Activated CD4-positive, alpha-beta T cell treated with anti-CD3 and anti-CD28 coated beads for 36 hours (primary cell): ENCODE measurements at regions of chr9 and their contacts with region 1.

Region 1: GRCh38 chr9:136790927-136791641 is at the start of gene TMEM141:
- DNase-seq: peak; percentile 100
- ATAC-seq: peak; percentile 93
- H3K4me3 Mint-ChIP-seq: peak within 1 kb of the TSS; percentile 80
- H3K27ac Mint-ChIP-seq: peak within 1 kb of the TSS; percentile 84
- H3K4me1 Mint-ChIP-seq: peaks cover 20% of the 10 kb centered on the region
- H3K27me3 Mint-ChIP-seq: no peaks in the 10 kb centered on the region
- total RNA-seq, gene TMEM141: 30.9 to 47.1 TPM

Region 2: GRCh38 chr9:136437472-136438288 is 353.4 kb before region 1 on chr9:
- CTCF ChIA-PET with region 1: no interaction called
- POLR2A ChIA-PET with region 1: no interaction called
- intact Hi-C with region 1: no loop called
- DNase-seq: no peak
- ATAC-seq: no peak
- H3K4me3 Mint-ChIP-seq: peak overlapping the region; percentile 80
- H3K27ac Mint-ChIP-seq: peak overlapping the region; percentile 70
- H3K4me1 Mint-ChIP-seq: peaks cover 21% of the 10 kb centered on the region
- H3K27me3 Mint-ChIP-seq: no peaks in the 10 kb centered on the region

Region 3: DNA sequence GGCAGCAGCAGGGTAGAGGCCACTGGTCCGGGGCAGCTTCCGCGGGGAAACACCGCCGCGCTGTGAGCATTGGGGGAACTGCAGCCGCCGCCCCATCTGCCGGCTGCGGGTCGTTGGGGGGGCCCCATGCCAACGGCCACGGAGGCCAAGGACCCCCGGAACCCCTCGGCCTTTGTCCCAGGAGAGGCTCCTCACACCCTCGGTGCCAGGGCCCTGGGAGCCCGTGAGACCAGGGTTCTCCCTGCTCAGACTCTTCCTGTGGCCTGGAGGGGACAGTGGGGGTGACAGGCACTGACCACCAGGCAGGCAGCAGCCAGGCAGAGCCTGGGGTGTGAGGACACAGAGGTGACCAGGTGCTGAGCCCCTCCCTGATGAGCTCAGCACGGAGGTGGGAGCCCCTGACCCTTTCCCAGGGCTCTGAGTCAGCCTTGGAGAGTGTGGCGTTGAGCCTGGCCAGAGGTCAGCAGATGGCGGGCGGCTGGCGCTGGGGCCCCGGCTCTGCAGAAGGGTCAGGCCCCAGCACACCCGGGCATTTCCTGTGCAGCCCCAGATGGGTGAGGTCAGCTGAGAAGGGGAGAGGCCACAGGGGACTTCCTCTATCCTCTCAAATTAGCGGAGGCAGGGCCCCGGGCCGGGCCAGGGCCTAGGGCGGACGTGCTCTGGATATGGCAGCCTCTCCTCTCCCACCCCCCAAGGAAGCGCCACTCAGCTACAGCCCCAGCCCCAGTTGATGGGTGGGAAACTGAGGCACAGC is 146.3 kb before region 1 on chr9:
- CTCF ChIA-PET with region 1: no interaction called
- POLR2A ChIA-PET with region 1: no interaction called
- intact Hi-C with region 1: no loop called
- DNase-seq: peak; percentile 87
- ATAC-seq: peak; percentile 98
- H3K4me3 Mint-ChIP-seq: no peak overlapping the region
- H3K27ac Mint-ChIP-seq: no peak overlapping the region
- H3K4me1 Mint-ChIP-seq: no peaks in the 10 kb centered on the region
- H3K27me3 Mint-ChIP-seq: peaks cover 20% of the 10 kb centered on the region

Region 4: DNA sequence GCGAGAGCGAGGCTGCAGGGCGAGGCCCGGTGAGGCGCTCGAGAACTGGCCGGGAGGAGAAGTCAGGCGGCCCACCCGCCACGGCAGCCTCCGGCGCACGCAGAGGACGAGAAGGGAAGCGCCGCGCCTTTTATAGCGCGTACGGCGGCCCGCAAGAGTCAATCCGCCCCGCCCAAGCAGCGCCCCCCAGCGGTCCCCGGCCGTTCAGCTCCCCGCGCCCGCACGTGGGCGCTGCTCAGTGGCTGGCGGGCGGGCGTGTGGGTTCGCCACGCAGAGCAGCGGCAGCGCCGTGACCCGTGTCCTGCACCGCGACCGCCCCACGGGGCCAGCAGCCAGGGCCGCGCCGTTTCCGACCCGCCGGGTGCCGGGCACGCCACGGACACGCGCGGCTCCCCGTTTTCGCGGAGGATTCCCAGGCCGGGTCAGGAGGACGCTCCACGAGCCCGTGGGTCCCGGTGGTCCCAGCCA is 63.0 kb before region 1 on chr9:
- CTCF ChIA-PET with region 1: interaction called, 7 read pairs
- POLR2A ChIA-PET with region 1: no interaction called
- intact Hi-C with region 1: loop called in 1 of 2 experiments (anchors 2 kb)
- DNase-seq: peak; percentile 95
- ATAC-seq: peak; percentile 72
- H3K4me3 Mint-ChIP-seq: peak overlapping the region; percentile 100
- H3K27ac Mint-ChIP-seq: no peak overlapping the region
- H3K4me1 Mint-ChIP-seq: peaks cover 39% of the 10 kb centered on the region
- H3K27me3 Mint-ChIP-seq: no peaks in the 10 kb centered on the region

Region 5: DNA sequence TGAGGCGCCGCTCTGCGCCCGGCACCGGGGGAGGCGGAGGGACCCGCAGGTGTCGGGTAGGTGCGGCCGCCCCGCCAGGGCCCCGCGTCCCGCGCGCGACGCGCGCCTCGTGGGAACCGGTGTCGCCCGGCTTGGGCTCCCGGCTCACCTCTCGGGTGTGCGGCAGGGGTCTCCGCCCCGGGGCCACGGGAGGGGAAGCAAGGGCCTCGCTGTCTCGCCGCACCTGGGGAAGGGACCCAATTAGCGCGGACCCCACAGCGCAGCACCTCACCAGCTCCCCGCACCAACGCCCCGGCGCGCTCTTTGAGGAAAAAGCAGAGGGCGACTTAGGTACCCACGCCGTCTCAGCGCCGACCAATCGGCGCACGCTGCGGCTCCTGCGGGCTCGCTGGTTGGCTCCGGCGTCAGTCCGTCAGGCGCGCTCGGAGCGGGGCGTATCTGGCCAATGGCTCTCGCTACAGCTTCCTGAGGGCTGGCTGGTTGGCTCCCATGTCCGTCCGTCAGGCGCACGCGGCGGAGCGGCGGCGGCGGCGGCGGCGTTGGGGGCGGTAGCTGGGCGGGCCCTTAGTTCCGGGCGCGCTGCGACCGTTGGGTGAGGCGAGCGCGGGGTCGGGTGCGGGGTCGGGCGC is 95.0 kb after region 1 on chr9 and contains the start of gene TRAF2:
- CTCF ChIA-PET with region 1: no interaction called
- POLR2A ChIA-PET with region 1: no interaction called
- intact Hi-C with region 1: loop called (anchors 1 to 5 kb)
- DNase-seq: peak; percentile 98
- ATAC-seq: peak; percentile 89
- H3K4me3 Mint-ChIP-seq: peak within 1 kb of the TSS; percentile 85
- H3K27ac Mint-ChIP-seq: peak within 1 kb of the TSS; percentile 95
- H3K4me1 Mint-ChIP-seq: peaks cover 51% of the 10 kb centered on the region
- H3K27me3 Mint-ChIP-seq: no peaks in the 10 kb centered on the region
- total RNA-seq, gene TRAF2: 37.4 to 46.2 TPM

Region 6: DNA sequence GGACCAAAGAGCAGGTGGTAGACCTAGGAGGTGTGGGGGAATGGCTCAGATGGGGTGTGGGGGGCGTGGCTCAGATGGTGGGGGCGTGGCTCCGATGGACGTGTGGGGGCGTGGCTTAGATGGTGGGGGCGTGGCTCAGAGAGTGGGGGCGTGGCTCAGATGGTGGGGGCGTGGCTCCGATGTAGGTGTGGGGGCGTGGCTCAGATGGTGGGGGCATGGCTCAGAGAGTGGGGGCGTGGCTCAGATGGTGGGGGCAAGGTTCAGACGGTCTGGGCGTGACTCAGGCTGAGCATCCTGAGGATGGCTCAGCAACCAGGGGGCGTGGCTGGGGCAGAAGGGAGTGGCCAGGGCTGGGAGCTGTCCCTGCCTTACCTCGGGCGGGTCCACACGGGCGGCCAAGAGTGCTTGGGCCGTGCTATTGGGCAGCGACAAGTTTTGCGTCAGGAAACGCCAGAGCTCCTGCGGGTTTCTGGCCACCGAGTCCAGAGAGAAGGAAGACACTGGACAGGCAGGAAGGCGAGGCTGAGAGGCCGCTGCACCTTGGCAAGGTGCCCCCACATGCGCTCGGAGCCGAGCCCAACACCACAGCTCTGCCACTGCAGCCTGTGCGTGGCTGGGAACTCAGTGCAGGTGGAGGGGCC is 231.0 kb after region 1 on chr9:
- CTCF ChIA-PET with region 1: interaction called, 4 read pairs
- POLR2A ChIA-PET with region 1: no interaction called
- intact Hi-C with region 1: loop called (anchors 1 to 5 kb)
- DNase-seq: peak; percentile 93
- ATAC-seq: peak; percentile 97
- H3K4me3 Mint-ChIP-seq: no peak overlapping the region
- H3K27ac Mint-ChIP-seq: no peak overlapping the region
- H3K4me1 Mint-ChIP-seq: peaks cover 3% of the 10 kb centered on the region
- H3K27me3 Mint-ChIP-seq: no peaks in the 10 kb centered on the region

Region 7: DNA sequence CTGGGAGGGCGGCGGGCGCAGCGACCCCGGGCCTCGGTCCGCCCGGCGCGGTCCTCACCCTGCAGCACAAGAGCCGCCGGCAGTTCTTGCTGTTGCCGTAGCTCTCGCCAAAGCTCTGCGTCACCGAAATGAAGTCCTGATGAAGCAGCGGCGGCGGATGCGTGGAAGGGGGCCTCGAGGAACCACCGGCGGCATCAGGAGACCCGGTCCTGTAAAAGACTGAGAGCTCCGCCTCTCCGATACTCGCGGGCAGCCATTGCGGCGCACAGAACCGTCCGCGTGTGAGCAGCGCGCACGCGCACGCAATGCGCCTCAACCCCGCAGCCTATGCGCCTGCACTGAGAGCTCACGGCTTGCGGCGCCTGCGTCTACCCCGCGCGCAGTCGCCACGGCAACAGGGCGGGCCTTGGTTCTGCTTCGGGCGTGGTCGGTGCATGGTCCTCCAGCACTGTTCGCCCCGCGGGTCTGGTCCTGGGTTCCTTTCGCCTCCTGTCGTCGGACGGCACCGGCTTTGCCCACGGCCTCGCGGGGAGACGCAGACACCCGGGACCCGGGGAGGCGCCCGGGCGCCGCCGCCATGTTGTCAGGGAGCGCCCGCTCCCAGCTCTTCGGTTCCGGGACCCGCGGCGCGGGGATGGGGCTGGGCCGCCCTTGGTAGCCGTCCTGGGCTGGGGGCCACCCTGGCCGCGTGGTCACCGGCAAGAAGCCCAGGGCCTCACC is 338.5 kb after region 1 on chr9:
- CTCF ChIA-PET with region 1: no interaction called
- POLR2A ChIA-PET with region 1: no interaction called
- intact Hi-C with region 1: loop called in 1 of 2 experiments (anchors 1 kb)
- DNase-seq: peak; percentile 95
- ATAC-seq: peak; percentile 96
- H3K4me3 Mint-ChIP-seq: peak overlapping the region; percentile 89
- H3K27ac Mint-ChIP-seq: peak overlapping the region; percentile 70
- H3K4me1 Mint-ChIP-seq: peaks cover 21% of the 10 kb centered on the region
- H3K27me3 Mint-ChIP-seq: peaks cover 5% of the 10 kb centered on the region

Region 8: GRCh38 chr9:137254624-137255447 is 463.8 kb after region 1 on chr9 and contains the start of gene NELFB:
- CTCF ChIA-PET with region 1: no interaction called
- POLR2A ChIA-PET with region 1: no interaction called
- intact Hi-C with region 1: loop called in 1 of 2 experiments (anchors 1 kb)
- DNase-seq: peak; percentile 97
- ATAC-seq: peak; percentile 94
- H3K4me3 Mint-ChIP-seq: peak within 1 kb of the TSS; percentile 87
- H3K27ac Mint-ChIP-seq: peak within 1 kb of the TSS; percentile 81
- H3K4me1 Mint-ChIP-seq: peaks cover 18% of the 10 kb centered on the region
- H3K27me3 Mint-ChIP-seq: no peaks in the 10 kb centered on the region
- total RNA-seq, gene NELFB: 41.4 to 54.1 TPM